PC-3 (cell line): ENCODE measurements at regions of chr7 and their contacts with region 1.

Region 1: DNA sequence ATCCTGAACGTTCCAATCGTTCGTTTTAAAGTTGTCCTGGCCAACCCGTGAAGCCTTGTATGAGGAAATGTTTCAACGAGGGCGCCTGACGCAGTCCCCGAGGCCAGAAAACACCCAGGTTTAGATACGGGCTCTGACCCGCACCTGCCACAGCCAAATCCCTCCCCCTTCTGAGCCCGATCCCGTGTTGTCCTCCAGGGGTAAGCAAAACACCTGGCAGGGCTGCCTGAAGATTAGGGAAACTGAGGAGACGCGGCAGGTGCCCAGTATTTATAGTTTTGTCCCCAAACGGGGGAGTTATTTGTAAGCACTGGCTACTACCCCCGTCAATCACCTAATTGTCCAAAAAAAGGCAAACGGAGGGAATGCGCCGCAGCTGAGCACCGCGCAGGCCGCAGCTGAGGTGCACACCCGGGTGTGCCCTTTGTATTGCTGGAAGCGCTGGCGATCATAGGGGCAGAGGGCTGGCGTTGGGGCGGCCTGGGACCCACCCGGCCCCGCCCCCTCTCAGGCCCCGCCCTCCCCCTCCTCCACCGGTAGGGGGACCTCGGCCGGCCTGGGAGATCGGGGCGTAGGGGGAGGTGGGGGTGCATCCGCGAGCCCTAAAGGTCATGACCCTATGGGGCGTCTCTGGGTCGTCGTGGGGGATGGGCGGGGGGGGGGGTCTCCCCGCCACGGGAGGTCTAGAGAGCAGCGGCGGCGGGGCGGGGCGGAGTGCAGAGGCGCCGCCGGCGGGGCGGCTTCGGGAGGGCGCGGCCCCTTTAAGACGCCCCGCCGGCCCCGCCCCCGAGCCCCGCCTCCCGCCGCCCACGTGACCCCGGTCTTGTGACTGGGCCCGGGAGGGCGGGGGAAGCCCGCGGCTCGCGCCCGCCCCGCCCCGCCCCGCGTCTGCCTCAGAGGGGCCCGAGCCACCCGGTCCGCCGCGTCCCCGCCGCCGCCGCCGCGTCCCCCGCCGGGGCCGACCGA is at the start of gene BRI3:
- DNase-seq: peak; percentile 85
- ATAC-seq: peak; percentile 48
- H3K4me3 ChIP-seq: peak within 1 kb of the TSS; percentile 97
- H3K27ac ChIP-seq: peak within 1 kb of the TSS; percentile 84
- H3K4me1 ChIP-seq: peaks cover 37% of the 10 kb centered on the region
- H3K27me3 ChIP-seq: no peaks in the 10 kb centered on the region
- CTCF ChIP-seq: no peak
- total RNA-seq, gene BRI3: 52.5 and 55.0 TPM in 2 replicates

Region 2: GRCh38 chr7:98251841-98252639 is 29.0 kb before region 1 on chr7 and contains the start of gene TECPR1:
- CTCF ChIA-PET with region 1: no interaction called
- POLR2A ChIA-PET with region 1: no interaction called
- intact Hi-C with region 1: loop called (anchors 2 kb)
- DNase-seq: peak; percentile 92
- ATAC-seq: peak; percentile 98
- H3K4me3 ChIP-seq: peak within 1 kb of the TSS; percentile 99
- H3K27ac ChIP-seq: peak within 1 kb of the TSS; percentile 65
- H3K4me1 ChIP-seq: peaks cover 28% of the 10 kb centered on the region
- H3K27me3 ChIP-seq: no peaks in the 10 kb centered on the region
- CTCF ChIP-seq: no peak
- total RNA-seq, gene TECPR1: 9.4 and 11.5 TPM in 2 replicates

Region 3: DNA sequence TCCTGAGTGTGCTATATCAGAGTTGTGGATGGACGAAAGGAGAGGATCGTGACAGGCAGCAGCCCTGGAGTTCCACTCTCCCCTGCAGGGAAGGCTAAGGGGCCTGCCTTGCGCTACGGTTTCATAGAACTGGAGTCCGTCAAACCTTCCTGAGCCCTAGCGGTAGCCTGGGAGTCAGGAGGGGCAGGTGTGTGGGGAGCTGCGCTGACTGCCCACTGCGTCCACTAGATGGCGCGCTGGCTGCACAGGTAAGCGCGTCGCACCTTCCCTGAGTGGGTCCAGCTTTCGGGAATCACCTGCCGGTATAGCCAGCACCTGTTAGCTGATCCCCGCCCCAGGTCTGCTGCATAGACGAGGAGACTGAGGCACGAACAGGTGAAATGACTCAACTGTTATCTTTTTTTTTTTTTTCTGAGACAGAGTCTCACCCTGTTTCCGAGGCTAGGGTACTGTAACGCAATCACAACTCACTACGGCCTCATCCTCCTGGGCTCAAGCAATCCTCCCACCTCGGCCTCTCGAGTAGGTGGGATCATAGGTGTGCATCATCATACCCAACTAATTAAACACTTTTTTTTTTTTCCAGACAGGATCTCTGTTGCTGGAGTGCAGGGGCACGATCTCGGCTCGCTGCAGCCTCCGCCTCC is 140.0 kb after region 1 on chr7:
- CTCF ChIA-PET with region 1: no interaction called
- POLR2A ChIA-PET with region 1: no interaction called
- intact Hi-C with region 1: loop called (anchors 5 kb)
- DNase-seq: peak; percentile 90
- ATAC-seq: peak; percentile 53
- H3K4me3 ChIP-seq: no peak overlapping the region
- H3K27ac ChIP-seq: no peak overlapping the region
- H3K4me1 ChIP-seq: peaks cover 33% of the 10 kb centered on the region
- H3K27me3 ChIP-seq: no peaks in the 10 kb centered on the region
- CTCF ChIP-seq: peak; percentile 96

Region 4: GRCh38 chr7:98458090-98458875 is 177.2 kb after region 1 on chr7:
- CTCF ChIA-PET with region 1: interaction called, 12 read pairs
- POLR2A ChIA-PET with region 1: no interaction called
- intact Hi-C with region 1: no loop called
- DNase-seq: no peak
- ATAC-seq: no peak
- H3K4me3 ChIP-seq: no peak overlapping the region
- H3K27ac ChIP-seq: no peak overlapping the region
- H3K4me1 ChIP-seq: no peaks in the 10 kb centered on the region
- H3K27me3 ChIP-seq: 0 out of 2 replicates have a peak, but pooled peaks cover under 1% of the 10 kb centered on the region
- CTCF ChIP-seq: no peak

Region 5: GRCh38 chr7:99829524-99830160 is 1548.6 kb after region 1 on chr7:
- CTCF ChIA-PET with region 1: no interaction called
- POLR2A ChIA-PET with region 1: no interaction called
- intact Hi-C with region 1: loop called (anchors 10 kb)
- DNase-seq: no peak
- ATAC-seq: no peak
- H3K4me3 ChIP-seq: no peak overlapping the region
- H3K27ac ChIP-seq: no peak overlapping the region
- H3K4me1 ChIP-seq: no peaks in the 10 kb centered on the region
- H3K27me3 ChIP-seq: peaks cover 36% of the 10 kb centered on the region; the same call in 1 of the 2 replicates
- CTCF ChIP-seq: no peak